ENCODE measurements at regions of chr1 and their contacts with region 1.

Region 1: DNA sequence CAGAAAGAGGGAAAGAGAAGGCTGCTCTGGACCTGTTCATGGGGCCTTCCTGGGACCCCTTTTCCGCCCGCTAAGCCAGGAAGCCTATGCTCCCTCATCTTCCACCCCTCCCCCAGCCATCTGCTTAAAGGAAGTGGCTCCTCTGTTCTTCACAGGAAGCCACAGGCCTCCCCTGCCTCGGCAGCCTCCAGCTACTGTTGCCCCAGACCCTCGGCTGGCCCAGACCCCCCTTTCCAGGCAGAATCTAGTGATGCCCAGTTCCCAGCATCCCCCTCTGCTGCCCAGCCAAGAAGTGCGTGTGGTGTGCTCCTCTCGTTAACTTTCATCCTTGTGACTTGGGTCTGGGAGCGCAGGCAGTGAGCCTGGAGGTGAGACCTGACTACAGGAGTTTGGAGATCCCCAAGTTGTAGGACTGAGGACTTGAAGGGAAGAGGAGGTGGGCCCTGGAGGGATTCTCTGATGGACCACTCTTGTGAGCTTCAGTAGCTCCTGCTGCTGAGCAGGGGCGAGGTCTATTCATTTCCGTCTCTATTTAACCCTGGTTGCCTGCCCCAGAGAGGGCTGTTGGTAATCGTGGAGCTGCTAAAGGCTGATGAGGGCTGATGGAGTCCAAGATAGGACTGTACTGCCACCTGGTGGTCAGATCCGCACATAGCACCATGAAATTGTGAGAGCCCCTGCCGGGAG is 9.1 kb downstream of the IFI6 start:
- DNase-seq: peak; percentile 88 to 93 (median 90)
- H3K4me3 ChIP-seq: peak overlapping the region in 4 of 7 experiments; percentile 33 to 52 (median 41)
- H3K27ac ChIP-seq: peak overlapping the region in 1 of 2 experiments; percentile 66
- H3K4me1 ChIP-seq: peaks cover 14 to 54% (median 30%) of the 10 kb centered on the region in 4 experiments
- H3K27me3 ChIP-seq: no peaks in the 10 kb centered on the region

Region 2: DNA sequence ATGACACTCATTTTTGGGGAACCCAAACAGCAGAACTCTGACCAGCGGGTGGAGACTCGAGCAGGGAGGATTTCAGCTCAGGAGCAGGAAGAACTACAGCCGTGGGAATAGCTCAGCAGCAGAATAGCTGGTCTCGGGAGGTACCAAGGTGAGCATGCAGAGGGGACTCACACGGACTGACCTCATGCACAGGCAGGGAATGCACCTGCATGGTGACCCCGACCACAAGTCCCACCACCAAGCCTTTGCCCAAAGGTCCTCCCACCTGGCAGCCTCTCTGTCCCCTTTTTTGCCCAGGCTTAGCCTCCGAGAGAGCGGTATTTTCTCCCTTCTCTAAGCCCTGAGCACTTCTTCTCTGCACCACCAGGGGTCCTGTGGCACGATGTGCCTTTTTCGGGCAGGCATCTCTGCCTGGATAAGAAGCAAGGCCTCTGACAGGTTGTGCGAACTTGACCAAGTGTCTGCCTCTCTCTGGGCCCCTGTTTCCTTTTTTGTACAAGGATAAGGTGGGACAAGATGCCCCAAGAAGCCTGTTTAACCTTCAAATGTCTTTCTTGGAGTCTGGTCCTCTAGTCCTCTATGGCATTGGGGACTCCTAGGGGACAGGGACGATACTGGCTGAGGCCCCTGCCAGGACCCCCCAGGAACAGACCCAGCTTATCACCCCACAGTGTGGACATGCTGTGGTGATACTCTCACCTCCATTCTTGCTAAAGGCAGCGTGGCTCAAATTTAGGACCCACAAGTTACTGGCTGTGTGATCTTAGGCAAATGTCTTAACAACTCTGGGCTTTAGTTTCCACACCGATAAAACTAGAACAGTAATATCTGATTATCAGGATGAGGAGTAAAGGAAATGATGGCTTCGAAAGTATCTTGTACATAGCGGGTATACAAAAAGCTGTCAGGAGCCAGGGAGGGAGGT is 18.9 kb before region 1 on chr1:
- CTCF ChIA-PET with region 1: interaction called, 40 read pairs
- POLR2A ChIA-PET with region 1: no interaction called
- DNase-seq: peak; percentile 54 to 76 (median 70)
- H3K4me3 ChIP-seq: no peak overlapping the region
- H3K27ac ChIP-seq: no peak overlapping the region
- H3K4me1 ChIP-seq: peaks cover 0 to 7% (median 5%) of the 10 kb centered on the region in 4 experiments
- H3K27me3 ChIP-seq: no peaks in the 10 kb centered on the region

Region 3: GRCh38 chr1:27650539-27651175 is 12.2 kb before region 1 on chr1:
- CTCF ChIA-PET with region 1: interaction called, 40 read pairs
- POLR2A ChIA-PET with region 1: no interaction called
- DNase-seq: peak in 1 of 3 donors; percentile 32
- H3K4me3 ChIP-seq: no peak overlapping the region
- H3K27ac ChIP-seq: no peak overlapping the region
- H3K4me1 ChIP-seq: peaks cover 0 to 34% (median 14%) of the 10 kb centered on the region in 4 experiments
- H3K27me3 ChIP-seq: no peaks in the 10 kb centered on the region

Measured in common myeloid progenitor, CD34-positive (primary cell).